ENCODE measurements at regions of chr10 and their contacts with region 1.

Region 1: DNA sequence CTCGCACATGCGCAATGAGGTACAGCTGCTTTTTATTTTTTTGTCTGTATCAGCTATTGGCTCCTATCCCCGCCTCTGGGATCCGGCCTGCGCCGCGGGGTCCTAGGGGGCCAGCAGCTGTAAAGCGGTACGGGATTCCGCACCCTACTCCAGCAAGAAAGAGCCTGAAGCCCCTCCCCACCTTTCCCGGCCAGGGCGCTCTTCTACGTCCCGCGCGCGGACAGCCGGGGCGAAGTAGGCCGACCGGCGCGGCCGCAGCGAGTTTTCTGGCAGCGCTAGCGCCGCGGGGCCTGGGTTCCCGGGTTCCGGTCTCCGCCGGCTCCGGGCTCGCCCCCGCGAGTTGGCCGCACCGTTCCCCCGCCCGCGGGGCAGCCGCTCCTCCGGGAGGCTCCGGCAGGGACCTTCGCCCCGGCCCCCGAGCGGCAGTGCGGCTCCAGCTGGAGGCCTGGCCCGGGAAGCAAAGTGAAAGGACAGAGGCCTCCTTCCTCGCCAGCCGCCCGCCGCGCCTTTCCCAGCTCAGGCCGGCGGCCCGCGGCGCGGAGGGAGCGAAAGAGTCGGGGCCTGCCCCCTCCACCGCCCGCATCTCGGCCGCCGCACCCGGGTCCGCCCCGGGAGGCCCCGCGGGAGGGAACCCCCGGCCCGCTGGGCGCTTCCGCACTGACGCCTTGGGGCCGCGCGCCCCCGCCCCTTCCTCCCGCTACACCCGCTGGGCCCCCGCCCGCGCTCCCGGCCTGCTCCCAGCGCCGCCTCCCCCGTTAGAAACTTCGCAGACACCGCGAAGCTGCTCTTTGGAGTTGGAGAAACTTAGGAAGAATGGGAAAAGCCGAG is 4.7 kb upstream of the SPAG6 start:
- DNase-seq: peak; percentile 76
- H3K4me3 ChIP-seq: peak overlapping the region; percentile 76
- H3K27ac ChIP-seq: no peak overlapping the region
- H3K4me1 ChIP-seq: peaks cover 10% of the 10 kb centered on the region
- CTCF ChIP-seq: no peak

Region 2: GRCh38 chr10:22369434-22370072 is 29.0 kb after region 1 on chr10:
- CTCF ChIA-PET with region 1: no interaction called
- POLR2A ChIA-PET with region 1: interaction called, 10 read pairs
- intact Hi-C with region 1: no loop called
- DNase-seq: no peak
- H3K4me3 ChIP-seq: no peak overlapping the region
- H3K27ac ChIP-seq: no peak overlapping the region
- H3K4me1 ChIP-seq: peaks cover 10% of the 10 kb centered on the region
- CTCF ChIP-seq: no peak

Region 3: DNA sequence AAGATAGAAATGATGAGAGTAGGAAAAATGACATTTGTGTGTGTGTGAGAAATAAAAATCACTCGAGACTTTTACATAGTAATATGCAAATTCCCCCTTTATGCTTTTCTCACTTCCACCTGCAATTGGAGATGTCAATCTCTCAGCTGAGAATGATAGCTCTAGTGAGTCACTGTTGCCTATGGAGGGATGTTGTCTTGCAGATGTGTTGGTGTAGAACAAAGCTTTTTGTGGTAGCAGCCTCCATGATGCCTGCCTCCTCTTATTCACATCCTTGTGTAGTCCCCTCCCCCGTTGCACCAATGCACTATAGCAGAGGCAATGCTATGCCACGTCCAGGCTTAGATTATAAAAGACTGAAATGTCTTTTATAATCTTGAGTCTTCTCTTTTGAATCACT is 38.5 kb after region 1 on chr10:
- CTCF ChIA-PET with region 1: no interaction called
- POLR2A ChIA-PET with region 1: interaction called, 10 read pairs
- intact Hi-C with region 1: loop called (anchors 2 kb)
- DNase-seq: peak; percentile 53
- H3K4me3 ChIP-seq: peak overlapping the region; percentile 25
- H3K27ac ChIP-seq: peak overlapping the region; percentile 42
- H3K4me1 ChIP-seq: peaks cover 33% of the 10 kb centered on the region
- CTCF ChIP-seq: no peak

Measured in OCI-LY7 (cell line).